AG04449 (cell line): ENCODE measurements at regions of chr1 and their contacts with region 1.

Region 1: DNA sequence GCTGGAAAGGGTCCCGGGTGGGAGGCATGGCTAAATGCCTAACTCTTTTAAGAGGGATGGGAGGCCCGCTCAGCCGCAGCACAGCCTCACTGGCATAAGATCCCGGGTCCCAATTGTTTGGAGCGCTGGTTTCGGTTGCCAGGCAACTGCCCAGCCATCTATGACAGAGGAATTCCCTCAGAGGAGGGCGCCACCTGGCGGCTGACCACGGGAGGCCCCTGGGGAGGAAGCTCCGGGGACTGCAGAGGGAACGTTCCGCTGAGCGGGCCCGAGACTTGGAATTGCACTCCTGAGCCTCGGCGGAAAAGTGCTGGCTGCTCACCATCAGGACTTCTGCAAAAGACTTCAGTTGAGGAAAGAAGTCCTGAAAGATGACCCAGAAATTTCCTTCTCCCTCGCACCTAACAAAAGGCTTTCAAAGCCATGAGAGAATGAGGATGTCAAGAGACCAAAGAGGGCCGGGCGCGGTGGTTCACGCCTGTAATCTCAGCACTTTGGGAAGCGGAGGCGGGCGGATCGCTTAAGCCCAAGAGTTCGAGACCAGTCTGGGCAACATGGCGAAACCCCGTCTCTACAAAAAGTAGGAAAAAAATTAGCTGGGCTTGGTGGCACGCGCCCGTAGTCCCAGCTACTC is 1.1 kb upstream of the ELAPOR1 start:
- DNase-seq: no peak
- H3K4me3 ChIP-seq: peak overlapping the region; percentile 25
- CTCF ChIP-seq: peak; percentile 98

Region 2: GRCh38 chr1:109090196-109091077 is 22.3 kb before region 1 on chr1 and contains the start of gene TMEM167B:
- CTCF ChIA-PET with region 1: interaction called, 17 read pairs
- POLR2A ChIA-PET with region 1: no interaction called
- DNase-seq: peak; percentile 84
- H3K4me3 ChIP-seq: peak within 1 kb of the TSS; percentile 97
- CTCF ChIP-seq: no peak

Region 3: DNA sequence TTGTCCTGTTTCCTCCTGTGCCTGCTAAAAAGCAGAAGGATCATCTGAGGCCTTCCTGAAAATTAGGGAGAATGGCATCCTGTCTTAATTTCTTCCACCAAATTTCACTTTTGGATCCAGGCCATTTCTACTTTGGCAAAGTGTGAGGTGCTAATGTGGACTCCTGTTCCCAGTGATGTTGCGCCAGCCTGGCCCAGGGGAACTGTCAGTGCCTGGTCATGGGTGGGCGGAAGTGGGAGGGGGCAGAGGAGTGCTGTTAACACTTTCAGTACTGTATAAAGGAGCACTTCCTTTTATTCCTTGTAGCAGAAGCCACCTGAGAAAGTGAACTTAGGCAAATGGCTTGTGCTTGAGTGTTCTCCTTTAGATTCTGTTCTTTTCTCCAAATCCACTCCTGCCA is 21.0 kb after region 1 on chr1:
- CTCF ChIA-PET with region 1: interaction called, 76 read pairs
- POLR2A ChIA-PET with region 1: no interaction called
- DNase-seq: no peak
- H3K4me3 ChIP-seq: no peak overlapping the region
- CTCF ChIP-seq: no peak

Region 4: DNA sequence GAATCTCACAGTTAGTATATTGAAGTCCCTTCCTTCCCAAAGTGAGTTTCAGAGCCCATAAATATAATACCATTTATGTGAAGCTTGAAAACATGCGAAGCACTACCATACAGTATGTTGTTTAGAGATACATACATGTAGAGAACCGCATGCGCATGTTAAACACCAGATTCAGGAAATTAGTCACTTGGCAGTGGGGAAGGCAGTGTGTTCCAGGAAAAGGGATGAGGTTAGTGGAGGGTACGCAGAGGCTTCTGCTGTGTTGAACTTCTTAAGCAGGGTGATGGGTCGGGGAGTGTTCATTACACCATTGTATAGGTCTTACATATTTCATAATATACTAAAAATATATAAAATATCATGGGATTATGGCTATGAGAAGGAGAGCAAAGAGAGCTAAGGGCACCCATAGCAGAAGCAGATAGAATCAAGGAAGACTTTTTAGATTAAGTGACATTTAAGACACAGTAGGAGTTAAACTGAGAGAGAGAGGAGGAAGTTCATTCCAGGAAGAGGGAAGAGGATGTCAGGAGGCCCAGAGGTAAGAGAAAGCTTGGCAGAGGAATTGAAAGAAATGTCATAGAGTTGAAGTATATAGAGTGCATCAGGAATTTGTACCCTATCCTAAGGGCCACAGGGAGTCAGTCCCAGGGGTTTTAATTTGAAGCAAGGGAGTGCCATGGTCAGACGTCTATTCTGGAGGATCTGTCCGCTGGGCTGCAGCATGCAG is 57.4 kb after region 1 on chr1:
- CTCF ChIA-PET with region 1: interaction called, 10 read pairs
- POLR2A ChIA-PET with region 1: no interaction called
- DNase-seq: no peak
- H3K4me3 ChIP-seq: no peak overlapping the region
- CTCF ChIP-seq: no peak

Region 5: DNA sequence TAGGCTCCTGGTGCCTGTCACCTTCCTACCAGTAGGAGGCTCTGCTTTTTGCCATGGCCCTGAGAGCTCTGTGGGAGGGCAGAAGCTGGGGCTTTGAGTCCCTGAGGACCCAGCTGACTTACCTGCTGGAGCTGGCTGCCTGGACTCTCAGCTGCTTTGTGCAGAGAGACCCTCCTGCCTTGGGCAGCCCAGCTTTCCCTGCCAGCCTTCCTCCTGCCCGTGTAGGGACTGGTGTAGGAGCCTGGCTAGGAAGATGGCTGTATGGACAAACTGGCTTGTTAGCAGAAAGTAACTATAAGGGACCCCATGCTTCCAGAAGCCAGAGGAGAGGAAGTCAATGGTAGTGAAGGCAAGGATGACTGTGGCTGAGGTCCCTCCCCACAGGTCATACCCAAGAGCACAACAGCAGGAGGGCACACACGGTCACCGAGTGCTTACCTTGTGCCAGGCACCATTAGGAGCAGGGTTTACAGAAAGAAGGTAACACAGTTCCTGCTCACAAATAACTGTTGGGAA is 126.9 kb after region 1 on chr1:
- CTCF ChIA-PET with region 1: interaction called, 10 read pairs
- POLR2A ChIA-PET with region 1: no interaction called
- DNase-seq: no peak
- H3K4me3 ChIP-seq: no peak overlapping the region
- CTCF ChIP-seq: peak; percentile 62